Heart left ventricle (tissue), 16 donors: ENCODE measurements at regions of chr7 and their contacts with region 1.

Region 1: GRCh38 chr7:74101061-74101681 is 17.6 kb downstream of the LIMK1 start:
- DNase-seq: peak in 2 of 5 donors; percentile 48 to 64
- ATAC-seq: peak in 3 of 4 donors; percentile 66 to 81 (median 76)
- H3K4me3 ChIP-seq: no peak overlapping the region
- H3K27ac ChIP-seq: peak overlapping the region in 1 of 12 donors; percentile 24
- H3K4me1 ChIP-seq: peaks cover 0 to 12% (median 0%) of the 10 kb centered on the region in 12 donors
- H3K27me3 ChIP-seq: no peaks in the 10 kb centered on the region
- CTCF ChIP-seq: no peak
- POLR2A ChIP-seq: no peak

Region 2: GRCh38 chr7:73960548-73960947 is 140.6 kb before region 1 on chr7:
- intact Hi-C with region 1: no loop called
- DNase-seq: no peak
- ATAC-seq: no peak
- H3K4me3 ChIP-seq: no peak overlapping the region
- H3K27ac ChIP-seq: no peak overlapping the region
- H3K4me1 ChIP-seq: no peaks in the 10 kb centered on the region
- H3K27me3 ChIP-seq: no peaks in the 10 kb centered on the region
- CTCF ChIP-seq: no peak
- POLR2A ChIP-seq: no peak

Region 3: GRCh38 chr7:74115326-74115725 is 14.2 kb after region 1 on chr7:
- intact Hi-C with region 1: loop called in 1 of 10 experiments (anchors 1 kb)
- DNase-seq: peak in 1 of 5 donors; percentile 18
- ATAC-seq: peak in 1 of 4 donors; percentile 18
- H3K4me3 ChIP-seq: no peak overlapping the region
- H3K27ac ChIP-seq: no peak overlapping the region
- H3K4me1 ChIP-seq: no peaks in the 10 kb centered on the region
- H3K27me3 ChIP-seq: no peaks in the 10 kb centered on the region
- CTCF ChIP-seq: no peak
- POLR2A ChIP-seq: no peak

Region 4: GRCh38 chr7:74153758-74154157 is 52.6 kb after region 1 on chr7:
- intact Hi-C with region 1: no loop called
- DNase-seq: no peak
- ATAC-seq: no peak
- H3K4me3 ChIP-seq: no peak overlapping the region
- H3K27ac ChIP-seq: no peak overlapping the region
- H3K4me1 ChIP-seq: no peaks in the 10 kb centered on the region
- H3K27me3 ChIP-seq: no peaks in the 10 kb centered on the region
- CTCF ChIP-seq: no peak
- POLR2A ChIP-seq: no peak